ENCODE measurements at regions of chr12 and their contacts with region 1.

Region 1: GRCh38 chr12:3034067-3034750 is 43.0 kb upstream of the TSPAN9 start:
- DNase-seq: peak; percentile 78
- ATAC-seq: peak; percentile 80 to 86

Region 2: DNA sequence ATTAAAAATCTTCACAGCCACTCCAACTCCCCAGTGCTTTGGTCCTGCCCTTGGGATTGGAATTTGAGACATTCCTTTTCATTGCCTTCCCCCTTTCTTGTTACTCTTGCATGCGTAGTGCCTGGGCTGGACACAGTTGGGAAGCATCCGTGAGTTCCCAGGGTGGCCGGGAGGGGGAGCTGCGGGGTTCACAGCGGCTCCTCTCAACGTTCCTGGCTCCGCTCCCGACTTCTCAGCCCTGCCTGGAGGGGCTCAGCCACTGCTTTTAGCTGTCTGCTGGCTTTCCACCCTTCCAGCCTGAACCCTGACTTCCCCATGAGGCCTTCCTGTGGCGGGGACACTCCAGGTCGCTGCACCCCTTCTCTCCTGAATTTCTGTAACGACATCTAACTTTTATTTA is 180.6 kb before region 1 on chr12:
- intact Hi-C with region 1: loop called in 1 of 2 experiments (anchors 10 kb)
- DNase-seq: peak; percentile 89
- ATAC-seq: peak; percentile 92

Region 3: GRCh38 chr12:2884810-2885209 is 149.4 kb before region 1 on chr12:
- intact Hi-C with region 1: loop called (anchors 2 to 5 kb)
- DNase-seq: no peak
- ATAC-seq: no peak

Region 4: DNA sequence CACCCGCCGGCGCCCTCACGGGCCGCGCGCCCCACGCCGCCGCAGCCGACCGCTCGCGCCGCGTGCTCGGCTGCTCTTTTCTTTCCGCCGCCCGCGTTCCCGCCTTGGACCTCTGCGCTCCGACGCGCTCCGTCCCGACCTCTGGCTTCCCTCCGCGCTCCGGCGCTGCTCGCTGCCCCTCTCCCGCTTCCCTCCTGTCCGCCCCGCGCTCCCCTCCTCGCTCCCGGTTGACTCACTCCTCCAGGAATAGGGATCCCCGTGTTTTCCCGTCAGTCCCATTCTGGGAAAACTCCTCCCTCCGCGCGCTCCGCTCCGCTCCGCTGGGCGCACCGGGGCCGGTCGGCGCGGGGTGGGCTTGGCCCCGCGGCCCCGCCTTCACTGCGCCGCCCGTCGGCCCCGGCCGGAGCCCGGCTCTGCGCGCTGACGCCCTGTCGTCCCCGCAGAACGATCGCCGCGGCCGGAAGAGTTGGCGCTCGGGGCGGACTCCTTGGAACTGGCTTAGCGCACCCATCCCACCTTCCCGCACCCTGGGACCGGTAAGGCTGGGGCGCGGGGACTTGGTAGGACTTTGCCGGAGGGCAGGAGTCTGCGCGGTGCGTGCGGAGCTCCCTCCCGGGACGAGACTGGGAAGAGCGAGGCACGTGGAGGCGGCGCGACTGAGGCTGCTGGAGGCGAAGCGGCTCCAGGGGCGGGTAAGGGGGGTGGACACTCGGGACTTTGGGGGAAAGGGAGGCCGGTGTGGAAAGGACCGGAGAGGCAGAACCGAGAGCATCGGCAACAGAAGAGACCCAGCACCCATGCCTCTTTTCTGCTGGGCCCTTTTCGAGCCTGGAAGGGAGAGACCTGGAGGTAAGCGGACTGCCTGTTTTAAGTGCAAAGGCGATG is 74.5 kb before region 1 on chr12:
- intact Hi-C with region 1: loop called in 1 of 2 experiments (anchors 5 kb)
- DNase-seq: peak; percentile 80
- ATAC-seq: peak; percentile 59 to 68